ENCODE measurements at regions of chr5 and their contacts with region 1.

Region 1: GRCh38 chr5:131165119-131165727 is at the start of gene HINT1:
- DNase-seq: peak; percentile 88 to 89
- H3K4me3 ChIP-seq: peak within 1 kb of the TSS; percentile 73 to 88
- H3K27ac ChIP-seq: peak within 1 kb of the TSS; percentile 91 to 95
- H3K4me1 ChIP-seq: no peaks in the 10 kb centered on the region
- H3K27me3 ChIP-seq: no peaks in the 10 kb centered on the region
- CTCF ChIP-seq: peak; percentile 4 to 32 (median 23)
- POLR2A ChIP-seq: peak; percentile 51 to 84
- total RNA-seq, gene HINT1: 86.1 to 683 (median 196) TPM

Region 2: GRCh38 chr5:131064669-131065371 is 100.4 kb before region 1 on chr5:
- intact Hi-C with region 1: no loop called
- DNase-seq: no peak
- H3K4me3 ChIP-seq: no peak overlapping the region
- H3K27ac ChIP-seq: no peak overlapping the region
- H3K4me1 ChIP-seq: no peaks in the 10 kb centered on the region
- H3K27me3 ChIP-seq: no peaks in the 10 kb centered on the region
- CTCF ChIP-seq: no peak
- POLR2A ChIP-seq: no peak

Region 3: DNA sequence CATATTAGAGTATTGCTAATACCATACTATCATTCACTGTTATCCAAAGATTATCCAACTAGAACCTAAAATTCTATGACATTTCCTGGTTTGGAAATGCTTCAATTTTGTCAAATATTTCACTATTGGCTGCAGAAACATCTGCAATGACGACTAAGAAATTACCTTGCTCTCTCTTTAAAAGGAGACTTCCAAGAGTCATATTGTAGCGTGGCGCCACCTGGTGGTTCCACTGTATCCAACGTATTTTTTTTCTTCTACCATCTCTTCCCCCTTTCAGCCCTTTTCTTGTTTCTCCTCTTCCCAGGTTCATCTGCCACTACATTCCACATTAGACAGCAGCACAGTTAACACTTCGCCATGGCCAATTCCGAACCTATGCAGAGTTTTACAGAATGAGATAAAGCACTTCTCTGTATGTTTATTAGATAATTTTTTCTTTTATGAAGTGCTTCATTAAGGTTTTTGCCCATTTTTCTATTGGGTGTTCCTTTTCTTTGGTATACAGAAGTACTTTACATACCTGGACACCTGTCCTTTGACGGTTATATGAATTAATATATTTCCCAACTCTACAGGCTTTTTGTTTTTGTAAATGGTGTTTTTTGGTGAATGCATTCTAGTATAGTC is 252.1 kb after region 1 on chr5:
- intact Hi-C with region 1: loop called (anchors 10 kb)
- DNase-seq: peak; percentile 65 to 66
- H3K4me3 ChIP-seq: no peak overlapping the region
- H3K27ac ChIP-seq: no peak overlapping the region
- H3K4me1 ChIP-seq: no peaks in the 10 kb centered on the region
- H3K27me3 ChIP-seq: no peaks in the 10 kb centered on the region
- CTCF ChIP-seq: peak; percentile 60 to 83 (median 70)
- POLR2A ChIP-seq: no peak

Region 4: DNA sequence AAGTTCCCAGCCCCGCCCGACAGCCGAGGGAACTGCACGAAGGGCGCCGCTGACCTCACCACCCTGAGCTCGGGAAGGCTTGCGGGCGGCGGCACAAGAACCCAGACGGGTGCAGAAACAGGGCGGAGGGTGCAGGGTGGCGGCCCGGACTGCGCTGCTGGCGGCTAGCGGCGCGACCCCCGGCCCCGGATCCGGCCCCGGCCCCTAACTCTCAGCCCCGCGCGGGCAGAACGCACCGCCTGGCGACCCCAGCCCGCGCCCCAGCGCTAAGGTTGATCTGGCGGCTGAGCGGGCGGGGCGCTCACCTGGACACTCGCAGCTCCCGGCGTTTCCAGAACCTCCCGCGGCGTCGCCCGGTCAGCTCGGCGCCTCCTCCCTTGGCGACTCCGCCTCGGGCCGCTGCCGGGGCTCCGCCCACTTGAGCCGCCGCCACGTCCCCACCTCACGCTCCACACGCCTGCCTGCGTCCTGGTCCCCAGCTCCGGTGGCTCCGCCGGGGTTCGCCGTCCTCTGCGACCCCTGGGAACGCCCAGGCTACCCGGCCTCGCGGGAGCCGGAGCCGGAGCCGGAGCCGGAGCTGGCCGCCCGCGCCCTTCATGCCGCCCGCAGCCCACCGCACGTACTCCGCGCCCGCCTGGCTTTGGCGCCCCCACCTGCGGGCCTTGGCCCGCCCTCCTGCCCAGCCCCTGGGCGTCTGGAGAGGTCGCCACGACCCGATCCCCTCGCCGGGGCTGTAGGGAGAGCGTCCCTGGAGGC is 1062.4 kb after region 1 on chr5 and contains the start of gene P4HA2:
- intact Hi-C with region 1: loop called (anchors 10 kb)
- DNase-seq: peak; percentile 78 to 89
- H3K4me3 ChIP-seq: peak within 1 kb of the TSS; percentile 51 to 71
- H3K27ac ChIP-seq: peak within 1 kb of the TSS; percentile 82 to 92
- H3K4me1 ChIP-seq: peaks cover 15 to 26% of the 10 kb centered on the region in 2 donors
- H3K27me3 ChIP-seq: no peaks in the 10 kb centered on the region
- CTCF ChIP-seq: peak in 3 of 4 experiments; percentile 12 to 35 (median 25)
- POLR2A ChIP-seq: peak; percentile 77 to 78
- total RNA-seq, gene P4HA2: 19.4 to 112 (median 85.2) TPM

Measured in uterus (tissue), 4 donors.